ENCODE measurements at regions of chr1 and their contacts with region 1.

Region 1: DNA sequence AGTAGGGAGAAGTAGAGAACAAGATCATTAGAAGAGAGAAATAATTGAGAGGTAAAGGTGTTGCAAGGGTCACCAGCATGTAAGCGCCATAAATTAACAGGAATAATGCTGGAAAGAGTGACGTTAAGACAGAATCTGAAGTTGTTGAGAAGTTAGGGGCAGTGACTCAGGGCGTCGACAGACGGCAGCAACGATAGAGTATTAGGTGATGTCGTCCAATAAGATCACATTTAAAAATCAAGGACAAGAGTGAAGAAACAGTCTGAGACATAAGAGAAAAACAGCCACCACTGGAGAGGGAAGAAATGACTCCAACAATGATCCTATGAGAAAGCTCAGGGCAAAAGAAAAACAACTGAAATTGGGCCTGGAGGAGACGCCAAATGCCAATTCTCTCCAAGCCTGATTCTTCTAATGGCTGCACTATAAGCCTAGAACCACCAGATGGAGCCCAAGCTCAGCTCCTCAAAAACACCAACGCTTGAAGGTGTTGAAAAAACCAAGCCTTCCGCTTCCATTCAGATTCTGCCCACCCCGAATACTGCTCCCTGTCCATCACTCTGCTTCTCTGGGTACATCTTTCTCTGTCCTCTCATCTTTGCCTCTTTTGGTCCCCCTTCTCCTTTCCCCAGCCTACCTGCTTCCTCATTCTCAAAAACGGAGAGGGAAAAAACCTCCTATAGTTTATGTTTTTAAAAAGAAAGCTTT is 70.0 kb downstream of the LUZP1 start:
- DNase-seq: no peak
- ATAC-seq: peak; percentile 71

Region 2: GRCh38 chr1:22976461-22977243 is 122.0 kb before region 1 on chr1:
- intact Hi-C with region 1: loop called (anchors 10 kb)
- DNase-seq: no peak
- ATAC-seq: peak; percentile 89

Region 3: DNA sequence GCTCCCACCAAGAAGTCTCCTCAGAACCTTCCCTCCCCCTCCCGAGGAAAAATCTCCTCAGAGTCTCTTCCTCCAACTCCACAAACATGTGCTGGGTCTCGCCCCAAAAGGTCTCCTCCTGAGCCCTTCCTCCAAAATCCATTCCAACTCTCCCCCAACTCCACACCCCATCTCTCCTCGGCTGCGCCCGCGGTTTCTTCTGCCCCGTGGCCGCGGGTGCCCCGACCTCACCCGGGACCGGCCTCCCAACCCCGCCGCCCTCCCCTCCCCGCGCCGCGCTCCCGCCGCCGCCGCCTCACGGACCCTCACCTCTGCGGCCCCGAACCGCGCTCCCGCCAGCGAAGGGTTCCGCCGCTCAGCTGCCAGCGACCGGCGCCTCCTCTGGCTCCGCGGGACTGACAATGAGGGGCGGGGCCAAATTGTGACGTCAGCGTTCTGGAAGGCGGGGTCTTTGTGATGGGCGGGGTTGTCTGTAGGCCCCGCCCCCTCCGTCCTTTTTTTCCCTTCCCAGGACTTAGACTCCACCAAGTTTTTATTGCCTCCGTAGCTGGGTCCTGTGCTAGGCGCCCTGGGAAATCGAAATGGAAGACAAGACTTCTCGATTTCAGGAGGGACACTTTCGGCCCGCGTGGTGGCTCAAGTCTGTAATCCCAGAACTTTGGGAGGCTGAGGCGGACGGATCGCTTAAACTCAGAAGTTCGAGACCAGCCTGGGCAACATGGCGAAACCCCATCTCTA is 70.0 kb after region 1 on chr1 and contains the start of gene LUZP1:
- intact Hi-C with region 1: no loop called
- DNase-seq: peak; percentile 95
- ATAC-seq: peak; percentile 94
- total RNA-seq, gene LUZP1: 30.4 TPM

Region 4: GRCh38 chr1:23184212-23184934 is 85.8 kb after region 1 on chr1:
- intact Hi-C with region 1: loop called (anchors 1 kb)
- DNase-seq: no peak
- ATAC-seq: no peak

Region 5: GRCh38 chr1:23273450-23274133 is 175.0 kb after region 1 on chr1:
- intact Hi-C with region 1: loop called (anchors 10 kb)
- DNase-seq: no peak
- ATAC-seq: no peak

Measured in Right ventricle myocardium inferior (tissue), 1 donor.